A673 (cell line): ENCODE measurements at regions of chr17 and their contacts with region 1.

Region 1: DNA sequence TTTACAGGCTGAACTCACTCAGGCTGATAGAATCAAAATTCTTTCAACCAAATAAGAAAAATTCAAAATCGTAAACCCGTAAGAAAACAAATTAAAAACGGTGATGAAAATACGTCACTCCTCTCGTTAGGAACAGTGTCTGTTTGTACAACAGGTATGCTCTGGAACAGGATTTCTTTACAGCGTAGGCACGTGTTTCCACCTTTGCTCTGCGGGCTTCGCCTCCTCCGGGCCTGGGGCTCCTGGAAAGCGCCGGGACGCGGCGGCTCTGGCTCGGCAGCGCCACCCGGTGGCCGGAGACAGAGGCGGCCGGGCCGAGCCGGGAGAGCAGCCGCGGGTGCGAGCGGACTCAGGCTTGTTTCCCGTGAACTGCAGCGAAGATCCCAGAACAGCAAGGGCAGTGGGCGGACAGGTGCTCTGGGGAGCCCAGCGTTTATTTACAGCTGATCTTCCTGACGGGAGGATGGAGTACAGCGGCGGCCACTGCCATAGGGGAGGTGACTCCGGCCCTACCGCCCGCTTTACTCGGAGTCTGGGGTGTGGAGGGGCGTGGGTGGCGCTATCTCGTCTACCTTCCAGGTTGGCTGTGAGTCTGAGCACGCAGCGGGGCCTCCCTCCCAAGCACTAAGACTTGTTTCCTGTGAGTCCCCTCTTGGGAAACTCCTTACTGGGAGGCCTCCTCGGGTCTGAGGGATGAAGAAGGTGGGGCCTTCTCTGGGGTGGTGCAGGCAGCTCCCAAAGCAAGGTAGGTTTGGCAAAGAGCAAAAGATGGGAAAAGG is 40.5 kb upstream of the ATP2A3 start:
- DNase-seq: peak; percentile 68
- H3K4me3 ChIP-seq: no peak overlapping the region
- H3K27ac ChIP-seq: no peak overlapping the region
- H3K4me1 ChIP-seq: no peaks in the 10 kb centered on the region
- H3K27me3 ChIP-seq: no peaks in the 10 kb centered on the region
- CTCF ChIP-seq: peak; percentile 93

Region 2: GRCh38 chr17:3865176-3865575 is 139.5 kb before region 1 on chr17:
- CTCF ChIA-PET with region 1: no interaction called
- POLR2A ChIA-PET with region 1: no interaction called
- intact Hi-C with region 1: loop called (anchors 10 kb)
- DNase-seq: no peak
- H3K4me3 ChIP-seq: no peak overlapping the region
- H3K27ac ChIP-seq: no peak overlapping the region
- H3K4me1 ChIP-seq: no peaks in the 10 kb centered on the region
- H3K27me3 ChIP-seq: no peaks in the 10 kb centered on the region
- CTCF ChIP-seq: no peak

Region 3: GRCh38 chr17:3913531-3914311 is 91.0 kb before region 1 on chr17:
- CTCF ChIA-PET with region 1: interaction called, 5 read pairs
- POLR2A ChIA-PET with region 1: no interaction called
- intact Hi-C with region 1: loop called (anchors 2 kb)
- DNase-seq: peak; percentile 74
- H3K4me3 ChIP-seq: no peak overlapping the region
- H3K27ac ChIP-seq: no peak overlapping the region
- H3K4me1 ChIP-seq: peaks cover 9% of the 10 kb centered on the region
- H3K27me3 ChIP-seq: no peaks in the 10 kb centered on the region
- CTCF ChIP-seq: peak; percentile 97

Region 4: DNA sequence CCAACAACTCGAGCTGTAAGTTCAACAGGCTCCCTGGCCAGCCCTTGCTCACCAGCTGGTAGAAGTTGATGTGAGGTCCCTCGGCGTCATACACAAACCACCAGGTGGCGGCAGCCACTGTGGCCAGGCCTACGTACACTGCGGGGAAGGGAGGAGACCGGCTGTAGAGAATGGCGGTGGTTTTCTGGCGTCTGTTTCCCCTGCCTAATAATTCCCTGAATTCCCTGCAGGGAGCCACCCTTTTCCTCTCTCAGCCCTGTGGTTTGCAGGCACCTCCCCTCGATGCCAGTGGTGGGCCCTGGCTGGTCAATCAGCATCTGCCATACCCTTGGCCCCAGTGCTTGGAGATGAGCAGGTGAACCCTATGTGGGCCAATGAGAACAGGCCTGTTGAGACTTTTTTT is 69.6 kb before region 1 on chr17:
- CTCF ChIA-PET with region 1: no interaction called
- POLR2A ChIA-PET with region 1: no interaction called
- intact Hi-C with region 1: loop called (anchors 5 kb)
- DNase-seq: peak; percentile 84
- H3K4me3 ChIP-seq: no peak overlapping the region
- H3K27ac ChIP-seq: no peak overlapping the region
- H3K4me1 ChIP-seq: no peaks in the 10 kb centered on the region
- H3K27me3 ChIP-seq: no peaks in the 10 kb centered on the region
- CTCF ChIP-seq: peak; percentile 74

Region 5: GRCh38 chr17:4118015-4118743 is 113.5 kb after region 1 on chr17:
- CTCF ChIA-PET with region 1: no interaction called
- POLR2A ChIA-PET with region 1: no interaction called
- intact Hi-C with region 1: no loop called
- DNase-seq: no peak
- H3K4me3 ChIP-seq: no peak overlapping the region
- H3K27ac ChIP-seq: no peak overlapping the region
- H3K4me1 ChIP-seq: no peaks in the 10 kb centered on the region
- H3K27me3 ChIP-seq: no peaks in the 10 kb centered on the region
- CTCF ChIP-seq: no peak

Region 6: GRCh38 chr17:4143563-4144421 is 139.1 kb after region 1 on chr17:
- CTCF ChIA-PET with region 1: no interaction called
- POLR2A ChIA-PET with region 1: no interaction called
- intact Hi-C with region 1: no loop called
- DNase-seq: peak; percentile 95
- H3K4me3 ChIP-seq: peak overlapping the region; percentile 99
- H3K27ac ChIP-seq: peak overlapping the region; percentile 99
- H3K4me1 ChIP-seq: peaks cover 7% of the 10 kb centered on the region
- H3K27me3 ChIP-seq: no peaks in the 10 kb centered on the region
- CTCF ChIP-seq: no peak